Activated CD8-positive, alpha-beta T cell treated with anti-CD3 and anti-CD28 coated beads for 36 hours (primary cell): ENCODE measurements at regions of chr11 and their contacts with region 1.

Region 1: GRCh38 chr11:128472128-128473089 is 114.9 kb downstream of the ETS1 start:
- DNase-seq: peak; percentile 84
- ATAC-seq: peak; percentile 63
- H3K4me3 Mint-ChIP-seq: peak overlapping the region; percentile 77
- H3K27ac Mint-ChIP-seq: peak overlapping the region; percentile 97
- H3K4me1 Mint-ChIP-seq: peaks cover 92% of the 10 kb centered on the region
- H3K27me3 Mint-ChIP-seq: no peaks in the 10 kb centered on the region
- CTCF ChIP-seq: no peak

Region 2: GRCh38 chr11:128302425-128303186 is 169.8 kb before region 1 on chr11:
- CTCF ChIA-PET with region 1: interaction called, 8 read pairs
- POLR2A ChIA-PET with region 1: interaction called, 13 read pairs
- intact Hi-C with region 1: no loop called
- DNase-seq: peak; percentile 80
- ATAC-seq: peak; percentile 90
- H3K4me3 Mint-ChIP-seq: peak overlapping the region; percentile 85
- H3K27ac Mint-ChIP-seq: peak overlapping the region; percentile 90
- H3K4me1 Mint-ChIP-seq: peaks cover 79% of the 10 kb centered on the region
- H3K27me3 Mint-ChIP-seq: no peaks in the 10 kb centered on the region
- CTCF ChIP-seq: peak; percentile 14

Region 3: DNA sequence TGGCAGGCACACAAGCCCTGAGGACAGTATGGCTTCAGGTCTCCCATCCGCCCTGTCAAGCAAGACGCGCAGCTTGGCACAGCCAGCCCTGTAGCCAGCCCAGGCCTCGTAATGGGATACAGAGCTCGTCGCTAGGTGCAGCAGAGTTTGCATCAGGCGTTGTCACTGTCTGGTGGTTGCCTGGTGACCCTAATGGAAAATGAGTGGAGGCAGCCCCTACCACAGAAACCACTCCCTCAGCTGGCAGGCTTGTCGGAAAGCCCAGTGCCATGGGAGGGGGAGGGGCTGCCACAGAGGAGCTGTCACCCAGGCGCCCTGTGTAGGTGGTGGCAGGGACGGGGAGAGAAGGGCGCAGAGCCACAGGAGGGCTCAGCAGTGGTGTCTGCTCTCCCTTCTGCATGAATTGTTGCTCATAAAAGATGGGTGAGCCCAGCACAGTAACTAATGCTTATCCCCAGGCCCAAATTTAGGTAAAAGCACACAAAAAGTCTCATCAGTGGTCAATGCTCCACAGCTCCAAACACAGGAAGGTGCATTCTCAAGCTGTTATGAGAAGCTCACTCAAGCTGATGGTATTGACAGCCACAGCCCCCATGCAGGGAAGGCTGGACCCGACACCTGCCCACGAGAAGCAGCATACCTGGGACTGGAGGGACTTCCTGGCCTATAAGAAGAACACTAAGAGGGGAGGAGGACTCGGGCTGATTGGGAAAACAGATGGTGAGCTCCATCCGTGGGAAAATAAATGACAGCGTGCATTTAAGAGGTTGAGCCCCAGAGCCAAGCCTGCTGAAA is 49.6 kb before region 1 on chr11:
- CTCF ChIA-PET with region 1: interaction called, 10 read pairs
- POLR2A ChIA-PET with region 1: interaction called, 4 read pairs
- intact Hi-C with region 1: loop called (anchors 5 kb)
- DNase-seq: peak; percentile 99
- ATAC-seq: peak; percentile 93
- H3K4me3 Mint-ChIP-seq: peak overlapping the region; percentile 59
- H3K27ac Mint-ChIP-seq: peak overlapping the region; percentile 95
- H3K4me1 Mint-ChIP-seq: peaks cover 63% of the 10 kb centered on the region
- H3K27me3 Mint-ChIP-seq: no peaks in the 10 kb centered on the region
- CTCF ChIP-seq: no peak

Region 4: GRCh38 chr11:128497061-128497775 is 24.8 kb after region 1 on chr11:
- CTCF ChIA-PET with region 1: interaction called, 11 read pairs
- POLR2A ChIA-PET with region 1: interaction called, 1,082 read pairs
- intact Hi-C with region 1: no loop called
- DNase-seq: peak; percentile 49
- ATAC-seq: no peak
- H3K4me3 Mint-ChIP-seq: peak overlapping the region; percentile 88
- H3K27ac Mint-ChIP-seq: peak overlapping the region; percentile 98
- H3K4me1 Mint-ChIP-seq: peaks cover 94% of the 10 kb centered on the region
- H3K27me3 Mint-ChIP-seq: no peaks in the 10 kb centered on the region
- CTCF ChIP-seq: no peak

Region 5: GRCh38 chr11:128624269-128625175 is 152.1 kb after region 1 on chr11:
- CTCF ChIA-PET with region 1: interaction called, 93 read pairs
- POLR2A ChIA-PET with region 1: interaction called, 6 read pairs
- intact Hi-C with region 1: loop called (anchors 5 kb)
- DNase-seq: peak; percentile 77
- ATAC-seq: peak; percentile 57
- H3K4me3 Mint-ChIP-seq: peak overlapping the region; percentile 56
- H3K27ac Mint-ChIP-seq: peak overlapping the region; percentile 94
- H3K4me1 Mint-ChIP-seq: peaks cover 97% of the 10 kb centered on the region
- H3K27me3 Mint-ChIP-seq: no peaks in the 10 kb centered on the region
- CTCF ChIP-seq: no peak